GM10248 (cell line): ENCODE measurements at regions of chr2 and their contacts with region 1.

Region 1: GRCh38 chr2:111219285-111219684 is 98.6 kb downstream of the BCL2L11 start:
- DNase-seq: peak; percentile 66
- CTCF ChIP-seq: no peak

Region 2: GRCh38 chr2:111209045-111209514 is 10.2 kb before region 1 on chr2:
- CTCF ChIA-PET with region 1: interaction called, 10 read pairs
- POLR2A ChIA-PET with region 1: no interaction called
- DNase-seq: no peak
- CTCF ChIP-seq: no peak